ENCODE measurements at regions of chr4 and their contacts with region 1.

Region 1: GRCh38 chr4:1167247-1167949 is 5.0 kb downstream of the SPON2 start:
- DNase-seq: peak in 1 of 2 donors; percentile 90
- H3K4me3 ChIP-seq: peak overlapping the region; percentile 47 to 55
- H3K27ac ChIP-seq: peak overlapping the region; percentile 82
- H3K4me1 ChIP-seq: peaks cover 53% of the 10 kb centered on the region
- H3K27me3 ChIP-seq: no peaks in the 10 kb centered on the region
- CTCF ChIP-seq: peak; percentile 79 to 90 (median 89)
- POLR2A ChIP-seq: no peak

Region 2: GRCh38 chr4:742742-743311 is 424.6 kb before region 1 on chr4:
- intact Hi-C with region 1: no loop called
- DNase-seq: no peak
- H3K4me3 ChIP-seq: no peak overlapping the region
- H3K27ac ChIP-seq: no peak overlapping the region
- H3K4me1 ChIP-seq: no peaks in the 10 kb centered on the region
- H3K27me3 ChIP-seq: no peaks in the 10 kb centered on the region
- CTCF ChIP-seq: peak in 2 of 3 experiments; percentile 53 to 66
- POLR2A ChIP-seq: no peak

Region 3: GRCh38 chr4:1207603-1208265 is 40.3 kb after region 1 on chr4:
- intact Hi-C with region 1: loop called (anchors 5 kb)
- DNase-seq: no peak
- H3K4me3 ChIP-seq: peak overlapping the region in 1 of 2 donors; percentile 27
- H3K27ac ChIP-seq: peak overlapping the region; percentile 83
- H3K4me1 ChIP-seq: peaks cover 99% of the 10 kb centered on the region
- H3K27me3 ChIP-seq: no peaks in the 10 kb centered on the region
- CTCF ChIP-seq: no peak
- POLR2A ChIP-seq: no peak

Region 4: GRCh38 chr4:1274871-1275440 is 107.6 kb after region 1 on chr4:
- intact Hi-C with region 1: loop called (anchors 5 kb)
- DNase-seq: no peak
- H3K4me3 ChIP-seq: no peak overlapping the region
- H3K27ac ChIP-seq: no peak overlapping the region
- H3K4me1 ChIP-seq: no peaks in the 10 kb centered on the region
- H3K27me3 ChIP-seq: no peaks in the 10 kb centered on the region
- CTCF ChIP-seq: no peak
- POLR2A ChIP-seq: no peak